Activated CD8-positive, alpha-beta T cell treated with anti-CD3 and anti-CD28 coated beads for 36 hours (primary cell): ENCODE measurements at regions of chr2 and their contacts with region 1.

Region 1: DNA sequence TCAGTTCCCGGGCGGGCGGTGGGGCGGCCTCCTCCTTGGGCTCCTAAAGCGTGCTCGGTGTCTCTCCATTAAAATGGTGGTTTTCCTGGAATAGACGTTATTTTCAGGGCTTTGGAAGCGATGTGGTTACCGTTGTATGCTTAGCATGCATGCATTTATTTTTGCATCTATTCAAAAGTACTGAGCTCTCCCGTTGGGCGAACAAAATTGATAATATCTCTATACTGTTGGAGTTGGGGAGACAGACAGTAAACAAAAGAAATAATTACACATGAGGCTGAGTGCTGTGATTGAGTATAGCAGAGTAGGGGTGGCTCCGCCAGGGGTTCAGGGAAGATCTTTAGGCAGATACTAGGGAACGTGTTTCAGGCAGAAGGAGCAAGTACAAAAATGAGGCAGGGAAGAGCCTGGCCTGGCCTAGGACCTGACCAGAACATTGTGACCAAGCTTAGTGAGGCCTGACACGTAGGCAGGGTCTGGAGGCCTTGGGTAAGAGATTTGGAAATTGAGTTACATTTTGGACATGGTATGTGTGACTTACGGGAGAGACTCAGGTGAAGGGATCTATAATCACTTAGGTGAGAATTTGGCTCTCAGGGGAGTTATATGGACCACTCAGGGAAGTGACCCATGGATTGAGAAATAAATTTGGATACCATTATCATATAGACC is 674 bp downstream of the NCAPH start:
- DNase-seq: no peak
- ATAC-seq: no peak
- H3K4me3 Mint-ChIP-seq: peak overlapping the region; percentile 97
- H3K27ac Mint-ChIP-seq: peak overlapping the region; percentile 85
- H3K4me1 Mint-ChIP-seq: peaks cover 41% of the 10 kb centered on the region
- H3K27me3 Mint-ChIP-seq: no peaks in the 10 kb centered on the region
- CTCF ChIP-seq: no peak

Region 2: GRCh38 chr2:96320728-96321622 is 15.3 kb before region 1 on chr2:
- CTCF ChIA-PET with region 1: interaction called, 17 read pairs
- POLR2A ChIA-PET with region 1: interaction called, 112 read pairs
- intact Hi-C with region 1: no loop called
- DNase-seq: peak; percentile 53
- ATAC-seq: peak; percentile 13
- H3K4me3 Mint-ChIP-seq: peak overlapping the region; percentile 76
- H3K27ac Mint-ChIP-seq: peak overlapping the region; percentile 54
- H3K4me1 Mint-ChIP-seq: peaks cover 53% of the 10 kb centered on the region
- H3K27me3 Mint-ChIP-seq: no peaks in the 10 kb centered on the region
- CTCF ChIP-seq: no peak

Region 3: GRCh38 chr2:96356889-96357288 is 20.6 kb after region 1 on chr2:
- CTCF ChIA-PET with region 1: no interaction called
- POLR2A ChIA-PET with region 1: interaction called, 11 read pairs
- intact Hi-C with region 1: no loop called
- DNase-seq: no peak
- ATAC-seq: no peak
- H3K4me3 Mint-ChIP-seq: no peak overlapping the region
- H3K27ac Mint-ChIP-seq: no peak overlapping the region
- H3K4me1 Mint-ChIP-seq: peaks cover 3% of the 10 kb centered on the region
- H3K27me3 Mint-ChIP-seq: no peaks in the 10 kb centered on the region
- CTCF ChIP-seq: no peak